A673 (cell line): ENCODE measurements at regions of chr6 and their contacts with region 1.

Region 1: GRCh38 chr6:63307581-63308246 is 12.1 kb downstream of the LGSN start:
- DNase-seq: peak; percentile 59
- H3K4me3 ChIP-seq: no peak overlapping the region
- H3K27ac ChIP-seq: no peak overlapping the region
- H3K4me1 ChIP-seq: no peaks in the 10 kb centered on the region
- H3K27me3 ChIP-seq: no peaks in the 10 kb centered on the region
- CTCF ChIP-seq: peak; percentile 68

Region 2: GRCh38 chr6:63571881-63572732 is 264.4 kb after region 1 on chr6 and contains the starts of genes LOC128125822 and PTP4A1:
- CTCF ChIA-PET with region 1: no interaction called
- POLR2A ChIA-PET with region 1: no interaction called
- intact Hi-C with region 1: loop called (anchors 5 kb)
- DNase-seq: peak; percentile 98
- H3K4me3 ChIP-seq: peak within 1 kb of the TSS; percentile 94
- H3K27ac ChIP-seq: peak within 1 kb of the TSS; percentile 98
- H3K4me1 ChIP-seq: peaks cover 11% of the 10 kb centered on the region
- H3K27me3 ChIP-seq: no peaks in the 10 kb centered on the region
- CTCF ChIP-seq: no peak
- total RNA-seq, gene PTP4A1: 64.7 and 80.1 TPM in 2 replicates